ENCODE measurements at regions of chr9 and their contacts with region 1.

Region 1: DNA sequence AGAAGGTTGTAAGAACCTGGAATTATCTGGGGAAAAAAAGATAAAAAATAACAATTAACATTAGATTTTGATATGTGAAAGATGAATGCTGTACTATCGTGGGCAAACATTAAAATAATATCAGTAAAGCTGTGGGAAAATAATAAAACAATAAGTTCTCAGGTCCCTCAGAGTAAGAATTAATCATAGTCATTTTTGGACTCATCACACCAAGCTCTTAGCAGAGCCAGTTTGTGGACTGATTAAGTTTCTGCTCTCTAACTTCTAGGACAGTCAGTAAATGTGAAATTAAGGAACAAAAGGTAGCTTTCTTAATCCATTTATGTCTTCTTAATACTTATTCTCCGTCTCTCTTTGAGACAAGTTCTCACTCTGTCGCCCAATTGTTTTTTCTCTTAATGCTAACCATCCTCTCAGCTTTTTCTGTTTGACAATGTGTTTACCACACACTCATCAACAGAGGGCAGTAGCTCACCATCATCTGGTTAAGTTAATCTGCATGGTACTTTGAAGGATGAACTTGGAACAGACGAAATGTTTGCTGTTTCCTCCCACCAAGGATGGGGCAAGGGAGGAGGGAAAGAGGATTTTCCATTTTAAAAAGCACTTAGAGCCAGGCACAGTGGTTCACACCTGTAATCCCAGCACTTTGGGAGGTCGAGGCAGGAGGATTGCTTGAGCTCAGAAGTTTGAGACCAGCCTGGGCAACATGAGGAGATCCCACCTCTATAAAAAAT is 5.3 kb upstream of the ACO1 start:
- DNase-seq: peak; percentile 46
- ATAC-seq: peak; percentile 87
- H3K4me3 Mint-ChIP-seq: peak overlapping the region; percentile 33
- H3K27ac Mint-ChIP-seq: no peak overlapping the region
- H3K4me1 Mint-ChIP-seq: peaks cover 14% of the 10 kb centered on the region
- H3K27me3 Mint-ChIP-seq: peaks cover 12% of the 10 kb centered on the region
- CTCF ChIP-seq: peak; percentile 68

Region 2: GRCh38 chr9:31983895-31984294 is 395.3 kb before region 1 on chr9:
- CTCF ChIA-PET with region 1: no interaction called
- POLR2A ChIA-PET with region 1: no interaction called
- intact Hi-C with region 1: no loop called
- DNase-seq: no peak
- ATAC-seq: no peak
- H3K4me3 Mint-ChIP-seq: no peak overlapping the region
- H3K27ac Mint-ChIP-seq: no peak overlapping the region
- H3K4me1 Mint-ChIP-seq: no peaks in the 10 kb centered on the region
- H3K27me3 Mint-ChIP-seq: no peaks in the 10 kb centered on the region
- CTCF ChIP-seq: no peak

Region 3: GRCh38 chr9:32200896-32201295 is 178.3 kb before region 1 on chr9:
- CTCF ChIA-PET with region 1: no interaction called
- POLR2A ChIA-PET with region 1: no interaction called
- intact Hi-C with region 1: no loop called
- DNase-seq: no peak
- ATAC-seq: no peak
- H3K4me3 Mint-ChIP-seq: no peak overlapping the region
- H3K27ac Mint-ChIP-seq: no peak overlapping the region
- H3K4me1 Mint-ChIP-seq: no peaks in the 10 kb centered on the region
- H3K27me3 Mint-ChIP-seq: peaks cover 2% of the 10 kb centered on the region
- CTCF ChIP-seq: no peak

Region 4: DNA sequence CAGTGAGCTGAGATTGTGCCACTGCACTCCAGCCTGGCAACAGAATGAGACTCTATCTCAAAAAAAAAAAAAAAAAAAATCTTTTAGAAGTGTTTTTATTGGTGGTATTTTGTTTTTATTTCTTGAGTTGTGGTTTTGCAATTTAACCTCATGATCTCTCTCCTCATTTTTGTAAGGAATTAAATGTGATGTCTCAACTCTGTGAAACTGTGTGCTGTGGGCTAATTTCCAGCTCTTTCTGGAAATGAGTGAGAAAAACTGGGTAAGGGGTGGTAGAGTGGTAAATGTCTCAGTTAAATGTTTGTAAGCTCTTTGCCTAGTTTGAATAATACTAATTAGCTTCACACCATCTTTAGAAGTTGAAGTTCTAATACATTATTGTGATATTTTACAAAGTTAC is 34.3 kb after region 1 on chr9:
- CTCF ChIA-PET with region 1: interaction called, 17 read pairs
- POLR2A ChIA-PET with region 1: no interaction called
- intact Hi-C with region 1: no loop called
- DNase-seq: no peak
- ATAC-seq: no peak
- H3K4me3 Mint-ChIP-seq: no peak overlapping the region
- H3K27ac Mint-ChIP-seq: no peak overlapping the region
- H3K4me1 Mint-ChIP-seq: no peaks in the 10 kb centered on the region
- H3K27me3 Mint-ChIP-seq: no peaks in the 10 kb centered on the region
- CTCF ChIP-seq: no peak

Region 5: DNA sequence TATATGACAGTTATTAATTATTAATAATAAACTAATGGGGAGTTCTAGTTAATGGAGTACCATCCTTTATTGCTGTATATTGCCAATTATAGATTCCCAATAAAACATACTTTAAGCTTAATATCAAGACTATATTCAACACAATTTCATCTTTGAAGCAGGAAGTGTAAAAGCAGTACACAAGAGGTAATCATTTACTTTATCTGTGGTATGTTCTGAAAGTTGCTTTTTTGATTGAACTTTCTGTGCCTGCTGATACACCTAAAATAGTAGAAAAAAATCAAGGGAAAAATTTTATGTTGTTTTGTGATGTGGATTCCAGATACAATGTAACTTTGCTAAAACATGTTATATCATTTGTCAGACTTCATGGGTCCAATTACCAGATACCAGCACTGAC is 63.3 kb after region 1 on chr9:
- CTCF ChIA-PET with region 1: interaction called, 32 read pairs
- POLR2A ChIA-PET with region 1: no interaction called
- intact Hi-C with region 1: no loop called
- DNase-seq: no peak
- ATAC-seq: no peak
- H3K4me3 Mint-ChIP-seq: no peak overlapping the region
- H3K27ac Mint-ChIP-seq: no peak overlapping the region
- H3K4me1 Mint-ChIP-seq: no peaks in the 10 kb centered on the region
- H3K27me3 Mint-ChIP-seq: no peaks in the 10 kb centered on the region
- CTCF ChIP-seq: no peak

Region 6: DNA sequence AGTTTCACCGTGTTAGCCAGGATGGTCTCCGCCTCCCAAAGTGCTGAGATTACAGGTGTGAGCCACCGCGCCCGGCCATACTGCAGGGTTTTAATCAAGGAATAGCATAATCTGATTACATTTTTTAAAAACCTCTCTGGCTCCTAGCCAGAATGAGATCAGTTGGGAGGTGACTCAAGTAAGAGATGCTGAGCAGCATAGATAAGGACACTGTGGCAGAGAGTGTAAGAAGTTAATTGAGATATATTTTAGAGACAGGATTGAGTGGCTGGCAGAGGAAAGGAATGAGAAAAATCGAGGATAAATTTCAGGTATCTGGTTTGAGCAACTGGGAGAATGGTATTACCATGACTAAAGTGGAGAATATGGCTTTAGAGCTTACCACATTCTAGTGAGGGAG is 154.2 kb after region 1 on chr9:
- CTCF ChIA-PET with region 1: interaction called, 18 read pairs
- POLR2A ChIA-PET with region 1: no interaction called
- intact Hi-C with region 1: no loop called
- DNase-seq: no peak
- ATAC-seq: no peak
- H3K4me3 Mint-ChIP-seq: no peak overlapping the region
- H3K27ac Mint-ChIP-seq: no peak overlapping the region
- H3K4me1 Mint-ChIP-seq: no peaks in the 10 kb centered on the region
- H3K27me3 Mint-ChIP-seq: no peaks in the 10 kb centered on the region
- CTCF ChIP-seq: no peak

Region 7: DNA sequence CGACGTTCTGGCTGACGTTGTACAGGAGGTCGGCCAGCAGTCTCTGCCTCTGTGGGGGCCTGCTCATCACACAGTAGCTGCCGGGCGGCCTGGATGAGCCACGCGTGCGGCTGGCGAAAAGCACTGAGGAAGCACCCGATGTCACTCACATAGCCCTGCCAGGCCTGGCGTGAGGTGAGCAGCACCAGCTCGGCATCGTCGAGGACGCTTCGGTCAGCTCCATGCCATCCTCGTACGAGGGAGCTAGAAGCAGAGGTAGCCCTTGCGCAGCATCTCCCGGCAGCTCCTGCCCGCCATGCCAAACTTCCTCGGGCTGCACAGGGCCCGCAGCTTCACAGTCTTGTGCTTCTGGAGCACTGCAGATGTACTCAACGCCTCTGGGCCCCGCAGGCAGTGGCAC is 187.6 kb after region 1 on chr9:
- CTCF ChIA-PET with region 1: interaction called, 123 read pairs
- POLR2A ChIA-PET with region 1: no interaction called
- intact Hi-C with region 1: no loop called
- DNase-seq: no peak
- ATAC-seq: no peak
- H3K4me3 Mint-ChIP-seq: no peak overlapping the region
- H3K27ac Mint-ChIP-seq: no peak overlapping the region
- H3K4me1 Mint-ChIP-seq: peaks cover 28% of the 10 kb centered on the region
- H3K27me3 Mint-ChIP-seq: no peaks in the 10 kb centered on the region
- CTCF ChIP-seq: no peak

Region 8: DNA sequence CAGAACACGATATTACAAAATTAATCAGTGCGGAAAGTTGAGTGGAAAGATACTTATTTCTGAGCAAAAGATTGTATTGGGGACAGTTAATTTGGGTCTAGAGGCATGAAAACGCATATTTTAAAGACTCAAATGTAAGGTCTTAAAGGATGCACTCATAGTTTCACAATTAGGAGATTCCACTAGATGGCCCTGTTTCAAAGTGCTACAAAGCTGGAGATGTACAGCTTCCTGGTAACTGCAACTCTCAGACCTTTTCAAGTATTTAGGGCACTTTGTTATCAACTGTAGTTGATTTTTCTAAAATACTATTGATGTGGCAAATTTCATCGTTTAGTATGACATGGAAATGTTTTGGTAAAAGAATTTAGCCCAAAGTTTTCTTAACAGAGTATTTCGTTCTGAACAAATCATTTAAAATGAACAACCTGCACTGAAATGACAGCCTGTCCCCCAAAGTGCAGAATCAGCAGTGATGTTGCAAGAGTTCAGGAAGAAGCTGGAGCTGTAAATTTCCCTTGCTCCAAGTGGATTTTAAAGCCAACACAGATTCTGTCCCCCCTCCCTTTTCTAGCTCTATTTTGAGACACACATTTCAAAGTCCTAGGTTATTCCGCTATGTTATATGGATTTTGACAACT is 210.0 kb after region 1 on chr9:
- CTCF ChIA-PET with region 1: interaction called, 477 read pairs
- POLR2A ChIA-PET with region 1: no interaction called
- intact Hi-C with region 1: no loop called
- DNase-seq: no peak
- ATAC-seq: peak; percentile 47
- H3K4me3 Mint-ChIP-seq: no peak overlapping the region
- H3K27ac Mint-ChIP-seq: no peak overlapping the region
- H3K4me1 Mint-ChIP-seq: no peaks in the 10 kb centered on the region
- H3K27me3 Mint-ChIP-seq: peaks cover 19% of the 10 kb centered on the region
- CTCF ChIP-seq: no peak

Measured in activated CD8-positive, alpha-beta T cell treated with anti-CD3 and anti-CD28 coated beads for 36 hours (primary cell).